ENCODE measurements at regions of chr19 and their contacts with region 1.

Region 1: DNA sequence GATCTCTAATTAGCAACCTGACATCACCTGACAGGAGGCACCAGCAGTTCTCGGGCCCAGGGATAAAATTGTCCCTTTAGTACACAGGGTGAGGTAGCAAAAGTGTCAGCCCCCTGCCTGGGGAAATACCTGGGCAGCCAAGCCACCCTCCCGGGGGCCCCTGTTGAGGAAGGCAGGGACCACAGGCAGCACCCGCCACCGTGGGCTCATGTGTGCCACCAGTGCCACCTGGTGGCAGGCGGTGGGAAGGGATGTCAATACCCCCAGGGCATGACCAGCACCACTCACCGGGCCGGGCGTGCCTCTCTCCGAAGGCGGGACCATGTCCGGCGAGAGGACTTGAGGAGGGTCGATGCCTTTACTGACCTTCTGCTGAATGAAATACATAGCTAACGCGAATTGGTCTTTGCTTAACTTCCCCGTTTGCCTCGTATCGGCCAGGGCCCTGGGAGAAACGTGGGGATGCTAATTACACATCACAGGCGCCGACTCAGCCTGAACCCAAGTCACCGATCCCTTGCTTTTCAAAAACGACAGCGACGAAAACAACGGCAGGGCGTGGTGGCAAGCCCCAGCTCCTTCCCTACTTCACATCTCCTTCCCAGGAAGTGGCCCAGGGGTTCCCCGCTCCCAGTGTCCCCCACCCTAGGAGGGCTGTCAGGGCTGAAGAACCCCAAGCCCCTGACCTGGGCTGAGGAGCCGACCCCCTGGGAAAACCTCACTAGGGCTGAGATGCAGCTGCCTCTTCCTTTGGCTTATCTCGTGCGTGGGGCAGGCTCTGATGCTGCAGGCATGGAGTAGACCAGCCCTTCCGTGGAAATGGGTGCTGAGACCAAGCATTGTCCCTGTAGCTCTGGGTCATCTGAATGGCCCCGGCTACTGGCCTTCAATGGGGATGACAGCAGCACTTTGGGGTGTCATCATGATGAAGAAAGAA is 53.8 kb downstream of the EPS15L1 start:
- DNase-seq: peak; percentile 54 to 84 (median 70)
- ATAC-seq: peak; percentile 99
- H3K4me3 ChIP-seq: no peak overlapping the region
- H3K4me3 Mint-ChIP-seq: no peak overlapping the region
- H3K27ac ChIP-seq: no peak overlapping the region
- H3K27ac Mint-ChIP-seq: peak overlapping the region; percentile 32
- H3K4me1 ChIP-seq: peaks cover 6% of the 10 kb centered on the region
- H3K4me1 Mint-ChIP-seq: peaks cover 9% of the 10 kb centered on the region
- H3K27me3 ChIP-seq: no peaks in the 10 kb centered on the region
- H3K27me3 Mint-ChIP-seq: no peaks in the 10 kb centered on the region
- CTCF ChIP-seq: peak; percentile 74

Region 2: DNA sequence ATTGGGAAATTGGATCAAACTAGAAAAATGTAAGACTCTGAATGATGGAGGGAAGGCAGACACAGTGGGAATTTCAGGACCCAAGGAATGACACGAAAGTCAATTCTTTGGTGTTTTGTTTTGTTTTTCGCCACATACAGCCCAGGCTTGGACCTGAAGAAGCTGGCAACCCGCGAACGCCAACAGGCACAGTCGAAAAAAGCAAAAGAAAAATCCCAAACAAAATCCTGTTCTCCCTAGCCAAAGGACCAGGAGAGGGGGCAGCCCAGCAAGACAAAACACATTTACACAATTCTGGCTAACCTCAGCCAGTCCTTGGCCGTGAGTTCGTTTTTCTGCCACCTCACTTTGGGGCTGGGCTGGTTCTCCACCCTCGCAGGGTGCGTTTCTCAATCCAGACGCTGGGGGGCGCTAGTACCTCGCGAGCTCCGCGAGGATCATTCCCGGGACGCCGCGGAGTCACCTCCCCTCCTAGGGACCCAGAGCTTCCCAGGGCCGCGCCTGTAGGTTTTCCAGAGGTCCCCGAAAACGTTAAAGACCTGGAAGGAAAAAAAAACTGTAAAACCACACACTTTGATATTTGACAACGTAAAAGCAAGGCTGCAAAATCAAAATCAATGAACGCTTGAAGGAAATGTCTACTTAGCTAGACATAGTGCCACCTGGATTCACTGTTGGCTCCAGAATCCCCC is 376.5 kb before region 1 on chr19:
- CTCF ChIA-PET with region 1: interaction called, 10 read pairs
- POLR2A ChIA-PET with region 1: no interaction called
- intact Hi-C with region 1: loop called (anchors 1 kb)
- DNase-seq: peak; percentile 50 to 86 (median 76)
- ATAC-seq: peak; percentile 91
- H3K4me3 ChIP-seq: no peak overlapping the region
- H3K4me3 Mint-ChIP-seq: peak overlapping the region; percentile 11
- H3K27ac ChIP-seq: no peak overlapping the region
- H3K27ac Mint-ChIP-seq: no peak overlapping the region
- H3K4me1 ChIP-seq: peaks cover 8% of the 10 kb centered on the region
- H3K4me1 Mint-ChIP-seq: peaks cover 16% of the 10 kb centered on the region
- H3K27me3 ChIP-seq: no peaks in the 10 kb centered on the region
- H3K27me3 Mint-ChIP-seq: no peaks in the 10 kb centered on the region
- CTCF ChIP-seq: peak; percentile 96

Region 3: DNA sequence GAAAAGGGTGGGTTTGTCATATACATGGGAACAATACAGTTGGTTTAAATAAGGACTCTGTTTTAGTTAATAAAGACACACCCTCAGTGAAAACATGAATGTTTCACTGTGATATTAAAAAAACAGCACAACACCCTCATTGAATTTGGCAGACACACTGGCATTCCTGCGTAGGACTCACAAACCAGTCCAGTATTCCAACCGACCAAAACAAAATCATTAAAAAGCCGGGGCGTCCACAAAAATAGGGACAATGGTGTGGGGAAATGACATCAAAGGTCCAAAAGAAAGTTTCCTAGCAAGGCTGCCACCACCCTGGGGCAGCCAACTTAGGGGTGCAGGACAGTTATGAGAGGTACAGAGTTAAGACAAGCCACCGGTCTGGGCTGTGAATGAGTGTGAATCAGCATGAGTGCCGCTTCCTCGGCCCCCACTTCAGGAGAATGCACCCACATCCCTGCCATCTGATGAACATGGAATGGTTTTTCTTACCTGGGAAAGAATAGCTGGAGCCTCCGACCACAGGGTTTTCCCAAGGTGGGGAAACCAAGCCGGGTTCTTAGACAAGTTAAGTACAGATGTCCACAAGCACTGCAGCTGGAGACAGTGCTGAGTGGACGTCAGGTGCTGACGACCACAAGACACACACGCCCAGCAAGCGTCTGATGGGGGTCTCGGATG is 20.0 kb before region 1 on chr19:
- CTCF ChIA-PET with region 1: interaction called, 10 read pairs
- POLR2A ChIA-PET with region 1: no interaction called
- intact Hi-C with region 1: no loop called
- DNase-seq: no peak
- ATAC-seq: no peak
- H3K4me3 ChIP-seq: no peak overlapping the region
- H3K4me3 Mint-ChIP-seq: no peak overlapping the region
- H3K27ac ChIP-seq: no peak overlapping the region
- H3K27ac Mint-ChIP-seq: no peak overlapping the region
- H3K4me1 ChIP-seq: peaks cover 11% of the 10 kb centered on the region
- H3K4me1 Mint-ChIP-seq: peaks cover 10% of the 10 kb centered on the region
- H3K27me3 ChIP-seq: no peaks in the 10 kb centered on the region
- H3K27me3 Mint-ChIP-seq: no peaks in the 10 kb centered on the region
- CTCF ChIP-seq: no peak

Region 4: DNA sequence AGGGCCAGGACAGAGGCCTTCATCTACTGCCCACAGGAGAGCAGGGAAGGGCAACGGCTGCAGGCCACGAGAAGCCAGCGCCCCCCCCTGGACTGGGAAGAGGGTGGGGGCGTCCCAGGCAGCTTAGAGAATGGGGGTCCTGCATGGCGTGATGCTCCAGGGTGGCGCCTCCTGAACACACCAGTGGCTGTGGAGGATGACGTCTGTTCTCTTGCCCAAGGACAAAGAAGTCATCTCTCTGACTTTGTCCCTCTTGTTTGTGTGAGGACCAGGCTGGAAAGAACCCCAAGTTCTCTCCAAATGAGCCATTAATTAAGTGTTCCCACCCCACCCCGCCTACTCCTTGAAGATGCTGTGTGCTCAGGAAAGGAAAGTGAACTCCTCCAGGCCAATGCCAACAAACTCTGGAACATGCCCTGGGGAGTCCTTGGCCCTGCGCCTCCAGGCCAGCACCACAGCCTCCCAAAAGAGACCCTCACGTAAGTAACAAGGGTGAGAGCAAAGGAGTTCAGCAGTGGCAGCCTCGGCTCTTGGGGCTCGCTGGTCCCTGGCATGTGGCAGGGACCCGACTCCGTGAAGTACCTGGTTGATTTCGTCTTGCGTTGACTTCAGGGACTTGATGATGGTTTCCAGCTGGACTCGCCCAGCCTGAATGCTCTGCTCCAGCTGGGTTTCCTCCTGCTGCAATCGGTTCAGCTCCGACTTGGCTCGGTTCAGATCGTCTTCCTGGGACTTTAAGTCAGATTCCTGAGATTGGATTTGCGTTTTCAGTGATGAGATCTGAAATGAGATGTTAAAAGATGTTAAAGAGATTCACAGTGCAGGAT is 14.6 kb before region 1 on chr19:
- CTCF ChIA-PET with region 1: interaction called, 10 read pairs
- POLR2A ChIA-PET with region 1: no interaction called
- intact Hi-C with region 1: no loop called
- DNase-seq: no peak
- ATAC-seq: no peak
- H3K4me3 ChIP-seq: no peak overlapping the region
- H3K4me3 Mint-ChIP-seq: no peak overlapping the region
- H3K27ac ChIP-seq: no peak overlapping the region
- H3K27ac Mint-ChIP-seq: peak overlapping the region; percentile 39
- H3K4me1 ChIP-seq: peaks cover 11% of the 10 kb centered on the region
- H3K4me1 Mint-ChIP-seq: peaks cover 6% of the 10 kb centered on the region
- H3K27me3 ChIP-seq: no peaks in the 10 kb centered on the region
- H3K27me3 Mint-ChIP-seq: no peaks in the 10 kb centered on the region
- CTCF ChIP-seq: no peak

Region 5: DNA sequence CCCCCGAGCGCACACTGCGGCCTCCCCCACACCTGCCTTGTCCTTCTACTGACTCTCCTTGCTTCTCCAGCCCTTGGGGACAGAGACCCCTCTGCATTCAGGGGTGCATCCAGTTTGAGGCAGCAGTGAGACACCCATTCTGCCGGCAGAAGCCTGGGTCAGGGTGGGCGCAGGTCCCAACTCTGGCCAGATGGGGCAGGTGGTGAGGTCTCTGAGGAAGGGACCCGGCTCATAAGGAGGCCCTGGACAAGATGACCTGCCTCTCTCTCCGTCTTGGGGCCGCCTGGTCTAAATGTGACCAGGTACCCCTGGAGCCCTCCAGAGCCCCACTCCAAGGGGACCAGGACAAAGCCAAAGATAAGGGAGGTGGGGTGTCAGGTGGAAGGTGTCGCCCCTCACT is 118.2 kb after region 1 on chr19:
- CTCF ChIA-PET with region 1: no interaction called
- POLR2A ChIA-PET with region 1: no interaction called
- intact Hi-C with region 1: no loop called
- DNase-seq: no peak
- ATAC-seq: no peak
- H3K4me3 ChIP-seq: no peak overlapping the region
- H3K4me3 Mint-ChIP-seq: no peak overlapping the region
- H3K27ac ChIP-seq: no peak overlapping the region
- H3K27ac Mint-ChIP-seq: peak overlapping the region; percentile 18
- H3K4me1 ChIP-seq: peaks cover 31% of the 10 kb centered on the region
- H3K4me1 Mint-ChIP-seq: peaks cover 32% of the 10 kb centered on the region
- H3K27me3 ChIP-seq: no peaks in the 10 kb centered on the region
- H3K27me3 Mint-ChIP-seq: no peaks in the 10 kb centered on the region
- CTCF ChIP-seq: no peak

Measured in CD8-positive, alpha-beta T cell (primary cell).